Natural killer cell (primary cell): ENCODE measurements at regions of chr17 and their contacts with region 1.

Region 1: GRCh38 chr17:49677933-49678847 is at the start of gene SPOP:
- DNase-seq: peak; percentile 96 to 100
- ATAC-seq: peak; percentile 92 to 99 (median 93)
- H3K4me3 ChIP-seq: peak within 1 kb of the TSS; percentile 88
- H3K4me3 Mint-ChIP-seq: peak within 1 kb of the TSS; percentile 97
- H3K27ac ChIP-seq: peak within 1 kb of the TSS; percentile 99
- H3K27ac Mint-ChIP-seq: peak within 1 kb of the TSS; percentile 97 to 98
- H3K4me1 ChIP-seq: peaks cover 18% of the 10 kb centered on the region
- H3K4me1 Mint-ChIP-seq: peaks cover 43 to 45% of the 10 kb centered on the region in 2 donors
- H3K27me3 ChIP-seq: no peaks in the 10 kb centered on the region
- H3K27me3 Mint-ChIP-seq: peaks cover 0 to 2% of the 10 kb centered on the region in 2 donors
- CTCF ChIP-seq: no peak
- total RNA-seq, gene SPOP: 45.4 to 56.5 (median 54.7) TPM

Region 2: GRCh38 chr17:49422714-49423113 is 255.5 kb before region 1 on chr17:
- intact Hi-C with region 1: no loop called
- DNase-seq: no peak
- ATAC-seq: no peak
- H3K4me3 ChIP-seq: no peak overlapping the region
- H3K4me3 Mint-ChIP-seq: no peak overlapping the region
- H3K27ac ChIP-seq: no peak overlapping the region
- H3K27ac Mint-ChIP-seq: no peak overlapping the region
- H3K4me1 ChIP-seq: no peaks in the 10 kb centered on the region
- H3K4me1 Mint-ChIP-seq: no peaks in the 10 kb centered on the region
- H3K27me3 ChIP-seq: no peaks in the 10 kb centered on the region
- H3K27me3 Mint-ChIP-seq: peaks cover 13 to 24% of the 10 kb centered on the region in 2 donors
- CTCF ChIP-seq: no peak

Region 3: DNA sequence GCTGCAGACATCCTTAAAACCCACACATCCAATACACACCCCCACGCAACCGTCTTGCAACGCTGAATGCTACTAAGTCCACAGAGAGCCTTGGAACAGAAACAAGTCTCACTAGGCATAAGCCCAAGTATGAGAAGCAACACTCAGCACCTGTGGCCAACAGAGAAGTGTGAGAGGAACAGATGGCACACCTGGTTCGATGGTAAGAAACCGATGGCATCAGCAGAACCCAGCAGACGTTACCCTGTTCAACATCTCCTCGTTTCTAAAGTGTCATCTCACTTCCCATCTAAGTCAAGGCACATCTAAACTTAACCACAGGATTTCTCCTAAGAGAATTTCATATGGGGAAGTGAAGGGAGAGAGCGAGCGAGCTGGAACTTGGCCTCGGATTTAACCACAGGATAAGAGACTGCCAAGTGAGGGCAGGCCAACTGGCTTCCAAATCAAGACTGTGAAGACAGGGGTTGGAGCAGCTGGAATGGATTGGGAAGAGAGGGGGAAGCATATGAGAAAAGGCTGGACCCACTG is 61.5 kb before region 1 on chr17:
- intact Hi-C with region 1: no loop called
- DNase-seq: no peak
- ATAC-seq: no peak
- H3K4me3 ChIP-seq: no peak overlapping the region
- H3K4me3 Mint-ChIP-seq: no peak overlapping the region
- H3K27ac ChIP-seq: no peak overlapping the region
- H3K27ac Mint-ChIP-seq: no peak overlapping the region
- H3K4me1 ChIP-seq: peaks cover 4% of the 10 kb centered on the region
- H3K4me1 Mint-ChIP-seq: peaks cover 12 to 14% of the 10 kb centered on the region in 2 donors
- H3K27me3 ChIP-seq: no peaks in the 10 kb centered on the region
- H3K27me3 Mint-ChIP-seq: no peaks in the 10 kb centered on the region
- CTCF ChIP-seq: no peak

Region 4: DNA sequence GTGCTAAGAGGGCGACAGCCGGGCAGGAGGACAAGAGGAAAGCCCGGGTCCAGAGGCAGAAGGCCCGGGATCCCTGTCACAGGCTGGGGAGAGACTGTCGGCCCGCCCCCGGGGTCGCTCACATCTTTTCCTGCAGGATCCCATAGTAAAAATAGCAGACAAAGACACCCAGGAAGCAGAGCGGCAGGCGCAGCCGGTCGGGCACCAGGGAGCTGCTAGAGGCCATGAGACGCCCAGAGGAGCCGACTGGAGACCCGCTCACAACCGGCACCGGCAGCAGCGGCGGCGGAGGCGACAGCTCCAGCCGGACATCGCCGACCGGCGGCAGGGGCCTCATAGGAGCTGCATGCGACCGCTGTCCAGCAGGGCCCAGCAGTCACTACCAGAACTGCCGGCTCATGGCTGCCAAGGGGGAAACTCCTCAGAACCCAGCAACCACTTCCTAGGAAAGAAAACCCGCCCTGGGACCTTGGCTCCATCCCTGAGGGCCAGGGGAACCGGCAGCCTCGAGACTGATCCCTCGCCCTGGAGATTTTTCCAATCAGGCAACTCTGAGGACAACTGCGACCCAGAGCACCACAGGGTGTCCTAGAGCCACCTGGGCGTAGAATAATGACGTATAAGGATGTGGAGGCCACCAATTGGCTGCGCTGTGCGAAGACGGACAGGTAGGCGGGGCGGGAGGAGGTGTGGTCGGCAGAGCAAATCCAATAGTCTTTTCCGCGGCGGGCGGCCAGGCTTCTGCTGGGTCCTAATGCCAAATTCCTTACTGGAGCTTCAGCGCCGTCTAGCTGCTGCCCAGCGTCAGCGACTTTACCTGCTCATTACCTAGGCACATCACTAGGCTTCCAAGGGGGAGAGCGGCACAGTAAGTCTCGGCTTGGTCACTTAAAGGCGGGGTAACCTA is 29.7 kb after region 1 on chr17 and contains the start of gene SLC35B1:
- intact Hi-C with region 1: loop called (anchors 1 kb)
- DNase-seq: peak; percentile 95 to 99
- ATAC-seq: peak; percentile 97 to 99 (median 98)
- H3K4me3 ChIP-seq: peak within 1 kb of the TSS; percentile 58
- H3K4me3 Mint-ChIP-seq: peak within 1 kb of the TSS; percentile 96
- H3K27ac ChIP-seq: peak within 1 kb of the TSS; percentile 93
- H3K27ac Mint-ChIP-seq: peak within 1 kb of the TSS; percentile 97 to 98
- H3K4me1 ChIP-seq: peaks cover 27% of the 10 kb centered on the region
- H3K4me1 Mint-ChIP-seq: peaks cover 57 to 60% of the 10 kb centered on the region in 2 donors
- H3K27me3 ChIP-seq: no peaks in the 10 kb centered on the region
- H3K27me3 Mint-ChIP-seq: no peaks in the 10 kb centered on the region
- CTCF ChIP-seq: peak; percentile 62
- total RNA-seq, gene SLC35B1: 74.0 to 121 (median 90.2) TPM

Region 5: GRCh38 chr17:49739641-49740271 is 61.6 kb after region 1 on chr17:
- intact Hi-C with region 1: loop called (anchors 2 kb)
- DNase-seq: peak; percentile 94 to 100
- ATAC-seq: peak; percentile 88 to 99 (median 95)
- H3K4me3 ChIP-seq: peak overlapping the region; percentile 34
- H3K4me3 Mint-ChIP-seq: peak overlapping the region; percentile 94
- H3K27ac ChIP-seq: peak overlapping the region; percentile 94
- H3K27ac Mint-ChIP-seq: peak overlapping the region; percentile 99 to 100
- H3K4me1 ChIP-seq: peaks cover 92% of the 10 kb centered on the region
- H3K4me1 Mint-ChIP-seq: peaks cover 84 to 87% of the 10 kb centered on the region in 2 donors
- H3K27me3 ChIP-seq: no peaks in the 10 kb centered on the region
- H3K27me3 Mint-ChIP-seq: no peaks in the 10 kb centered on the region
- CTCF ChIP-seq: no peak